WTC11 (cell line): ENCODE measurements at regions of chr3 and their contacts with region 1.

Region 1: DNA sequence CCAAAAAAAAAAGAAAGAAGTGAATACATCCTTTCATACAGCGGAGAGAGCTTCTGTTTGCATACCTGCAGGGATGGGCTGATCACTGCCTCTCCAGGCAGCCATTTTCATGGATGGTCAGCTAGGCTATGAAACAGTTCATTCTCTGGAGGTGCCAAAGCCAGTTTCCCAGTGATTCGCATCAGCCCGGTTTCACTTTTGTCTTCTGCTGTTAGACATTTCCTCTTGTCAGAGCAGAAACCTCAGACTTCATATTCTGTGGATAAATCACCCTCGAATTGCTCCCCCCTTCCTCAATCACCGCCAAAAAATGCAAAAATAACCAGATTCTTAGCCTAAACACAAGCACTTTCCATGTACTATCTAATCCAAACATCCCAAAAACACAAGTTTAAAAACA is 225.6 kb downstream of the ADAMTS9 start:
- DNase-seq: no peak
- ATAC-seq: no peak
- H3K4me3 Mint-ChIP-seq: no peak overlapping the region
- H3K27ac Mint-ChIP-seq: no peak overlapping the region
- H3K4me1 Mint-ChIP-seq: peaks cover 25% of the 10 kb centered on the region
- H3K27me3 Mint-ChIP-seq: no peaks in the 10 kb centered on the region
- CTCF ChIP-seq: no peak

Region 2: DNA sequence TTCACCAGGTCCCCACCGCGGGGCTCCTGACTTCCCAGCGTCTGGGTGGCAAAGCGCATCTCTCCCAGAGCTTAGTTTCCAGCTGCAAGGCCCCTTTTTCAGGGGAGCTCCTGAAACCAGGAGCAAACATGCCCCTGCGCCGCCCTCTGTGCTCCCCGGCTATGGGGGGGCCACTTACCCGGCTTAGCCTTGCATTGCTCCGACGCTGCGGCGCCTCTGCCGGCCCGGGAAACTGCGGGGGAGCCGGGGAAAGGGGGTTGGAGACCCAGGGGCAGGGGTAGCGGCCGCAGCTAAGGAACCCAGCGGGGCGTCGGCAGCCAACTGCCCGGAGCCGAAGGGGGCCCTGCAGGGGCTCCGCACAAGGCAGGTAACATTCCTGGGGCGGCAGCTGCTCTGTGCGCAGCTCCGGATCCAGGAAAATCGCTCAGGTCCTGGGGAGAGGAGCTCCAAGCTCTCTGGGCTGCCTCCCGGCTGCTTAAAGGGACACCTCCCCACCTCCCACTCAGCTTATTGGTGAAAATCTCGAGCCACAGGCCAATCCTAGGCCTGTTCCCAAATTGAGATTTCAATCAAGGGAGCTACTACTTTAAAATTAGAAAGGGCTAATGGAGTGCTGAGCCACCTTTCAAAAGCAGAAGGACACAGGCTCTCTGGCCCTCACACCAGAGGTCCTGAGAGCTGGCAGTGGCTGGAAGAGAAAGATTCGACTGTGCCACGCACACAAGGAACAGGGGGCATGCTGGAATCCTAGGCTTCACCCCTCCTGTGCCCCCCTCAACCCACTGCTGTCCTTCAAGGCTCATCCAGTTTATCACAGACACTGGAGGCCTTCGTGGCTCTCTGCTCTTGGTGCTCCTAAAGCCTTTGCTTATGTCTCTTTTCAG is 194.2 kb before region 1 on chr3:
- CTCF ChIA-PET with region 1: interaction called, 12 read pairs
- POLR2A ChIA-PET with region 1: no interaction called
- DNase-seq: peak; percentile 75
- ATAC-seq: peak; percentile 92
- H3K4me3 Mint-ChIP-seq: peak overlapping the region; percentile 69
- H3K27ac Mint-ChIP-seq: no peak overlapping the region
- H3K4me1 Mint-ChIP-seq: peaks cover 20% of the 10 kb centered on the region
- H3K27me3 Mint-ChIP-seq: no peaks in the 10 kb centered on the region
- CTCF ChIP-seq: no peak

Region 3: DNA sequence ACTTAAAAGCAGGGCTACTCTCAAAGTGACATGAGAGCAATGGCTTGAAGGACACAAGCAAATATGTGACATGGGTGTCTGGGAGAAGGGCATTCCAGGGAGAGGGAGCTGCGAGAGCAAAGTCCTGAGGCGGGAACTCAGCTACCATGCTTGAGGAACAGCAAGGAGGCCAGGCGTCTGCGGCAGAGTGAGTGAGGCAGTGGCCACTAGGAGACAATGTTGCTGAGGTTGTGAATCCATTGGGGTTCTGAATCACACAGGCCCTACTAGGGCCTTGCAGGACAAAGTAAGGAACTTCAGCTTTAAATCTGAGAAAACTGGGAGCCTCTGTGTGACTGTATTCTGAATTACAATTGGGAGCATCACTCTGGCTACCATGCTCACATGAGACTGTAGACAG is 142.8 kb before region 1 on chr3:
- CTCF ChIA-PET with region 1: interaction called, 15 read pairs
- POLR2A ChIA-PET with region 1: no interaction called
- DNase-seq: peak; percentile 60
- ATAC-seq: peak; percentile 99
- H3K4me3 Mint-ChIP-seq: no peak overlapping the region
- H3K27ac Mint-ChIP-seq: peak overlapping the region; percentile 53; the same call in 1 of the 2 replicates
- H3K4me1 Mint-ChIP-seq: peaks cover 15% of the 10 kb centered on the region
- H3K27me3 Mint-ChIP-seq: no peaks in the 10 kb centered on the region
- CTCF ChIP-seq: no peak

Region 4: DNA sequence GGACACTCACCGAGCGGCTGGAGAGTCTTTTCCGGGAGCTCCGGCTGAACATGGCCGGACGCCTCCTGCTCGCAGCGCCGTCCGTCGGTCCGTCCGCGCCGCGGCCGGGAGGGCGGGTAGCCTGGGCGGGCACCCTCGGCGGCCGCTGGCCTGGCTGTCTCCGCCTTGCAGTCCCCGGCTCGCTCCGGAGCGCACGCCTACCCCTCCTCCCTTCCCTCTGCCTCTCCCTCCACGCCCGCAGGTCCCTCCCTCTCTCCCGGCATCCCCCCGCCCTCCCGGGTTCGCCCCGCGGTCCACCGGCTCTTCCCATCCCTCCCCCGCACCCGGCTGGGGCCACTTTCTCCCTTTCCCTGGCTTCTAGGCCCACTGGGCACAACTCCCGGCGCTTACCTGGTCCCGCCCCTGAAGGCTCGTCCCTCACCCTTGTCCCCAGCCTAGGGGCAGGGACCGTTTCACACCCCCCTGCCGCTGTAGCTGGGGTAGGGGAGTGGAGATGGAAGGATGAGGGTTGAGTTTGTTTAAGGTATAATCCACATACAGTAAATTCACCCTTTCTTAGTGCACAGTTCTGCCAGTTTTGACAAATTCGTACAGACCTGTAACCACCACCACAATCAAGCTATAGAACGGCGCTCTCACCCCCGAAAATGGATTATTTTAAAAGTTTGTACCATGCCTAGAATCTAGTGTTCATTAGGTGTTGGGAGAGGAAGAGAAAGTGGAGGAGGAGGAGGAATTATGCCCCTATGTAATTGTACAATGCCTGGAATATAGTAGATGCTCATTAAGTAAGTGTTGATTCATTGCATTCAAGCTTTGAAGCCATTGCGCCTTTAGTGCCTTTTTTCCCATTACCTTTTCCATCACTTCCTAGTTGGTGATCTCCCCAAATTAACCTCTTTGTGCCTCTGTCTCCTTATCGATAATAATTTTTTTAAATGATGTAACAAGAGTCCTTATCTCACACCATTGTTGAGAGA is 16.6 kb before region 1 on chr3:
- CTCF ChIA-PET with region 1: interaction called, 33 read pairs
- POLR2A ChIA-PET with region 1: no interaction called
- DNase-seq: peak; percentile 83
- ATAC-seq: peak; percentile 88
- H3K4me3 Mint-ChIP-seq: peak overlapping the region; percentile 80
- H3K27ac Mint-ChIP-seq: no peak overlapping the region
- H3K4me1 Mint-ChIP-seq: peaks cover 46% of the 10 kb centered on the region
- H3K27me3 Mint-ChIP-seq: peaks cover 24% of the 10 kb centered on the region
- CTCF ChIP-seq: no peak

Region 5: DNA sequence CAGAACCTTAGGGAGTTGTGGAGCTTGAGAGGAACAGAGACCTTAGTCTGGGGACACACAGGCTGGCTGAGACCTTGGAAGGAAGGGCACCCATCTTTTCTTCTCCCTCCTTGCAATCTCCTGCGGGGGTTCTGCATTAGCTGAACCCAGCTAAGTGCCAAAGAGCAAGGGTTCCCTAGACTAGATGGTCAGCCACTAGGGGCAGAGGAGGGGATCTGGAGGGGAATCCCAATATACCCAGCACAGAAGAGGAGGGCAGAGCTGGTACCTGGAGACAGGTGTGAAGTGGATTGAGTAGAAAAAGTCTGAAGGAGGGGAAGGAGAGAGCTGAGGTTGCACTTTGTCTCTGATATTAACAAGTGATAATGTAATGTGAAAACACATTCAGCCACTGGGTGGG is 12.8 kb after region 1 on chr3:
- CTCF ChIA-PET with region 1: interaction called, 23 read pairs
- POLR2A ChIA-PET with region 1: no interaction called
- DNase-seq: no peak
- ATAC-seq: peak; percentile 53
- H3K4me3 Mint-ChIP-seq: no peak overlapping the region
- H3K27ac Mint-ChIP-seq: no peak overlapping the region
- H3K4me1 Mint-ChIP-seq: peaks cover 23% of the 10 kb centered on the region
- H3K27me3 Mint-ChIP-seq: peaks cover 9% of the 10 kb centered on the region; the same call in 1 of the 2 replicates
- CTCF ChIP-seq: no peak

Region 6: GRCh38 chr3:64501298-64501906 is 39.2 kb after region 1 on chr3:
- CTCF ChIA-PET with region 1: no interaction called
- POLR2A ChIA-PET with region 1: no interaction called
- DNase-seq: no peak
- ATAC-seq: peak; percentile 24; the same call in 1 of the 2 replicates
- H3K4me3 Mint-ChIP-seq: no peak overlapping the region
- H3K27ac Mint-ChIP-seq: no peak overlapping the region
- H3K4me1 Mint-ChIP-seq: peaks cover 18% of the 10 kb centered on the region
- H3K27me3 Mint-ChIP-seq: peaks cover 4% of the 10 kb centered on the region; the same call in 1 of the 2 replicates
- CTCF ChIP-seq: no peak